Right ventricle myocardium inferior (tissue), 1 donor: ENCODE measurements at regions of chr6 and their contacts with region 1.

Region 1: GRCh38 chr6:165808021-165808420 is 145.0 kb upstream of the PDE10A start:
- DNase-seq: no peak
- ATAC-seq: peak; percentile 21

Region 2: DNA sequence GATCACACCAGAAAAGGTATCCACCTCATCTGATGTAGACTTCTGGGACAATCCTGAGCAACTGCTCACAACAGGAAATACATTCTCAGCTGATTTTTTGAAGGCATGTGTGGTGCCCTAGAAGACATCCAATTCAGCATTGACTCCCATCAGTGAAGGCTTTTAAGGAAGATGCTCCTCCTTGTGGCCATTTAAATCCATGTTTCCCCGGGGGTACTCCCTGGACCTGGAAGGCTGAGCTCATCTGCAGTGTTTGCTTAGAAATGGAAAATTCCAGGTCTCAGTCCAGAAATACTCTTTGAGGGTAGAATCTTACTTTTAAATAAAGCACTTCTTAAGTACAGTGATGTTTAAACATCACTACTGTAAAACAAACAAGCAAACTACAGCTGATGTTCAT is 50.6 kb after region 1 on chr6:
- intact Hi-C with region 1: no loop called
- DNase-seq: no peak
- ATAC-seq: no peak

Region 3: DNA sequence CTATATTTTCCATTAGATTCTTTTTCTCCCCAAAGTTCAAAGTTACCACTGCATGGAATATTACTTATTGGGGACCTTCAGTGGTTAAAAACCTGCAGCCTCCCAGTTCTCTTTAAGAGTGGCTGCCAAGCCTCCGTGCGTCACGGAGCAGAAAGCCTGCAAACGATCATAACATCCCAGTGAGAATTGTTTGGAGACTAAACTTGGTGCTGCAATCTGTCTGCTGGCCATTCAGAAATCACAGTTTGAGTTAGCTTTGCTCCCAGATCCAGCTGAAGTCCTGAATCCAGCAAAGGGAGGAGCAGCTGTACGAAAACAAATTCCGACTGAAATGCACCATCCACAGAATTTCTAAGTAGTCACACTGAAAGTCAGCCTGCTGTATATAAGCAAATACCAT is 68.6 kb after region 1 on chr6:
- intact Hi-C with region 1: loop called (anchors 2 kb)
- DNase-seq: peak; percentile 85
- ATAC-seq: peak; percentile 84